ENCODE measurements at regions of chr5 and their contacts with region 1.

Region 1: DNA sequence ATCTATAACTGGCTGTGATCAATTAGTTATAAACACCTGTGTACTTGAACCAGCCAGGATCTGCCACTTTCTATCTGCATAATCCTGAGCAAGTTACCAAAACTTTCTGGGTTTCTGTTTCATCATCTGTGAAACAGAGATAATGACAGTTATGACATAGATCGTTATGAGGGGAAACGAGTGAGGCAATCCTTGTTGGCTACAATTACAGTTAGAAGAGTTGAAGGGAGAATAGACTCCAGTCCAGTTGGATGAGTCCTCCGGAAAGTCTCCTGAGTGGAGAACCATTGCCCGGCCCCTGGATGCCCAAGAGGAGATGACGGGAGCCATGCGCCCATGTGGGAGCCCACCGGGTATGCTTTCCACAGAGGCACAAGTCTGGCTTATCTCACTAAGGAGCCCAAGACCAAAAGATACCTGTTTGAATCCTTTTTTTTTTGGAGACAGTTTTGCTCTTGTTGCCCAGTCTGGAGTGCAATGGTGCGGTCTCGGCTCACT is 4.5 kb downstream of the PDE6A start:
- DNase-seq: no peak
- H3K4me3 ChIP-seq: no peak overlapping the region
- CTCF ChIP-seq: no peak

Region 2: DNA sequence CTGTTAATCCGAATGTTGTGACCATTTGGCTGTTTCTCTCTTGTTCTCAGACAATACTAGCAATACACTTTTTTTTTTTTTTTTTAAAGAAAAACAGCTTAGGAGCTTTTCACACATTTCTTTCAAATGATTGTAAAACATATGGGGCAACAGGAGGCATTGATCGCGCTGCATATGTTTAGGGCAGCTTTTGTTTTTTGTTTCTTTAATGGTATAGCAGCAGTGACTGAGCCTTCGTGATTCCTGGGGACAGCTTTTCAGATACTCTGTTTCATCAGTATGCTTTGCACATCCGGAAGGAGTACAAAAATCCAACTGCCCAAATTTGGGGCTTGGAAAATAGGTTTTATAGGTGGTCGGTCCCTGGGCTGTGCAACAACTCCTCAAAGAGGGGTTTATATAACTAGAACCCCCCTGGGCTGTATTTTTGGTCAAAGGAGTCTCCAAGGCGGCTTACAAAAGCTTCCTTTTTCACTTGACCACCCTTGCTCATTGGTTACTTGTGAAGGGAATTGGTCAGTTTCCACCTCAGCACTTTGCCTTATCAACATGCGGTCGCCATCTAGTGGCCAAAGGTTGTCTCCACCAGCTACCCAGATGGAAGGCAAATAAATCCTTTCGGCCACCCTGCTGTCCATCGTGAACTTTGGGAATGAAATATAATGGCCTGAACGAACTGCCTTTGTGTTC is 87.3 kb before region 1 on chr5:
- in situ Hi-C with region 1: loop called (anchors 5 kb)
- DNase-seq: peak; percentile 78
- H3K4me3 ChIP-seq: no peak overlapping the region
- CTCF ChIP-seq: peak; percentile 94

Region 3: DNA sequence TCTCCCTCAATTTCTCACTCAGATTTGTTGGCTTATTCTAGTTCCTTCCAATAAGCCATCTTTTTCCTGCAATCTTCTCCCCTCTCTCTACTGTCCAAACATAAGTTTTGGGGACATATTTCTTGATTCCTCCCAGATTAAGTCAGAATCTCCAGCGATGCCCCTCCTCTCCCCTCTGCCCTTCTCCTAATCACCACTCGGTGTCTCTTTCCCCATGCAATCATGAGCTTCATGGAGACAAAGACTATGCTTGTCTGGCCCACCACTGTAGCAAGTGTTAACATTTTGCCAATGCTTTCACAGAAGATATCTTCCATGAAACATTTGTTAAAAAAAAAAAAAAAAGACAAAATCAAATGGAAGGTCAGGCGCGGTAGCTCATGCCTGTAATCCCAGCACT is 37.9 kb before region 1 on chr5:
- in situ Hi-C with region 1: no loop called
- DNase-seq: no peak
- H3K4me3 ChIP-seq: no peak overlapping the region
- CTCF ChIP-seq: no peak

Region 4: GRCh38 chr5:149969181-149969930 is 29.2 kb after region 1 on chr5:
- in situ Hi-C with region 1: no loop called
- DNase-seq: no peak
- H3K4me3 ChIP-seq: no peak overlapping the region
- CTCF ChIP-seq: no peak

Region 5: DNA sequence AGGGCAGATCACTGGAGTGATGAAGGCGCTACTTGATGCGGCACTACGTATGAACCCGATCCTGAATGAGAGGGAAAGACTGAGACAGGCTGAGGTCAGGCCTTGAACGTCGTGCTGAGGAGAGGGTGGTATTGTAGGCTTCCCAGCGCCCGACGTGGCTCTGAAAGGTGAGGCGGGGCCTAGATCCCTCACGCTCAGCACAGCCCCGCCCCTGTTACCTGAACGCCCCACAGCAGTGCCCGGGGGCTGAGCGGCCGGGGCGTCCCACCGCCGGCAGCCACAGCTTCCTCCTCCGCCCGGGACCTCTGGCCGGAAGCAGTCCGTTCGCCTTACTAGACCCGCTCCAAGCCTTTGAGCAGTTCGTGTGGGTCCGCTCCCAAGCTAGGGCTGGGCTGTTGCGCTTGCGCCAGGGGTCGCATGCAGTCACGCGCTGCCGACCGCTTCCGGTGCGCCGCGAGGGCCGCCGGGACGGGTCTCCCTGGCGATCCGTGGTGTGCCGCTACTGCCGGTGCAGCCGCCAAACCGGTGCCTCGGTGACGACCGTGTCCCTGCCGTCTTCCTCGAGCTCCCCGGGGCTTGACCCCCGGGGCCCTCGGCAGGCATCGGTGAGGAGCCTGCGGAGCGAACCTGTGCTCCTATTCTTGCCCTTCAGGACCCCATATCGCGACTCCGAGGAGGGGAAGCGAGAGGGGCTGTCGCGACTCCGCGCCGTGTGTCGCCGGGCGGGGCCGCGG is 60.3 kb after region 1 on chr5 and contains the starts of genes HMGXB3 and TIGD6:
- in situ Hi-C with region 1: loop called (anchors 10 kb)
- DNase-seq: peak; percentile 88
- H3K4me3 ChIP-seq: peak within 1 kb of the TSS; percentile 88
- CTCF ChIP-seq: no peak

Measured in astrocyte of the cerebellum (primary cell).